A549 (cell line): ENCODE measurements at regions of chr3 and their contacts with region 1.

Region 1: DNA sequence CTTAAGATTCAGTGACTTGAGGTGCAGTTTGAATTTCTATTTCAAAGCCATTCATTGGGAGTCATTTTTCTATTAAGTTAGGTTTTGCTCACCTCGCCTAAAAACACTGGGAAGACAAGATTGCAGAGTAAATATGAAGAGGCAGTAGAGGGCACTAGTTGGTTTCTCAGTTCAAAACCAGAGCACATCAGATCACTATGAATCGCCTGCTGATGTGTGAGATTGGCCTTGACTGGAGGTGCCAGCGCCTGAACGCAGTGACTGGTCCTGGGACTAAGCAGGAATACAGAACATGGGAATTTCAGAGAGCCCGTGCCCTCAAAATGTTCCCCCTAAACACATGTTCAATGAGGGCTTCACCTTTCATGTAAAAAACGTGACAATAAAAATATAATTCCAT is 229.0 kb downstream of the ITPR1 start:
- DNase-seq: peak; percentile 88 to 89
- ATAC-seq: peak; percentile 86 to 93
- H3K4me3 ChIP-seq: no peak overlapping the region
- H3K27ac ChIP-seq: peak overlapping the region; percentile 65 to 79
- H3K4me1 ChIP-seq: peaks cover 42% of the 10 kb centered on the region
- CTCF ChIP-seq: peak; percentile 77
- EP300 ChIP-seq: no peak
- POLR2A ChIP-seq: no peak
- RAD21 ChIP-seq: peak; percentile 93

Region 2: DNA sequence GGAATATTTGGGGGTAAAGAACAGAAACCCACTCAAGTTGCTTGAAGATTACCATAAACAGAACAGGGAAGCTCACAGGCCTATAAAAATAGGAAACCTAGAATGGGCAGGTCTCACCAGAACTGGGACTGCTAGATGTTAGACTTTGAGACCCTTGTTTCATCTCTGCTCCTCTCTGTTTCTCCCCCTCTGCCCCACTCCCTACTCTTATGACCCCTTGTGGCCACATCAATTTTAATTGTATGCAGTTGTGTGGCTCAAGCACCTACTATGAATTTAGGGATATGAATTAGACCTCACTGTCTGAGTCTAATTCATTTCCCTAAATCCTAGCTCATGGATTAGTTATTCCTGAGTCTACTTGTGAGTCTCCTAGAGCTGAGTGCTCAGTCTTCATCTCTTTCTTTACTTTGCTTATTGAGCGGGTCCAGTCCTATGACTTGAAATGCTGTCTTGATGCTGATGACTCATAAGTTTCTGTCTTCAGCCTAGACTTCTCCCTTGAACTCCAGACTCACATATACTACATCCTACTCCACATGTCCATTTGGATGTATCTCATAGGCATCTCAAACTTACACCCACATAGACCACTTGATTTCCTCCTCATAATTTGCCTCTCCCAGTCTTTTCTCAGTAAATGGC is 150.3 kb before region 1 on chr3:
- CTCF ChIA-PET with region 1: no interaction called
- POLR2A ChIA-PET with region 1: no interaction called
- DNase-seq: peak in 1 of 2 experiments; percentile 14
- ATAC-seq: peak; percentile 43 to 73; a peak in 4 of 6 replicates
- H3K4me3 ChIP-seq: no peak overlapping the region
- H3K27ac ChIP-seq: no peak overlapping the region
- H3K4me1 ChIP-seq: no peaks in the 10 kb centered on the region
- CTCF ChIP-seq: no peak
- EP300 ChIP-seq: no peak
- POLR2A ChIP-seq: no peak
- RAD21 ChIP-seq: no peak

Region 3: DNA sequence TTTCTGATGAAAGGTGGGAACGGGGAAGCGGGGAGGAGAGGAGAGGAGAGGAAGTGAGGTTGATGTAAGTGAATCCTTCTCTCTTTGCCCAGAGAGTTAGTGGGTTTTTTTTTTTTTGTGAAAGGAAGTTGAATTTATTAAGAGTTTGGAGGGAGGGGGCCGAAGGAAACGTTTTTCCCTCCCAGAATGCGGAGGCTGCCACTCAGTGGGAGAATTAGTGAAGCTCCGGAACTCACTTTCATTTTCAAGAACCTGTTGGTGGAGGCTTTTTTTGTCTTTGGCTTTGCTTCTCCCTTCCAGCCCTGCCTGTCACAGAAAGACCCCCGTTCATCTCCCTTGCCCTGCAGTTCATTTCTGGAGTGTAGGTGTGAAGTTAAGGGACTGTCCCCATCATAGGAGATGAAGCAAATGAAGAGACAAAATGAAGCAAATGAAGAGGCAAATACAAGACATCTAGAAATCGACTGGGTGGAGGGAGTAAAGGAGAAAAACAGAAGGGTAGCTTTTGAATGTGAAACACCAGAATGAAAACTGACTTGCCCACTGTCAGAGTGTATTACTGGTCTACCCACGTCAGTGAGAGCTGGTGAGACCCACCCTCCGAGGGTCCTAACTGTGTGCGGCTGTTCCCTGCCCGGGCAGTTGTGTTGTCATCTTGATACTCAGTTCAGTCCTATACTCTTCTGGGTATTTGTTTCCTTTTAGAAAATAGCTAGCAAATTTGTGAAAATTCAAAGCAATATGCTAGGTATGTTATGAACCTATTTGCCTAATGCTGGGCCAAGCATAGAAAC is 137.4 kb before region 1 on chr3:
- CTCF ChIA-PET with region 1: no interaction called
- POLR2A ChIA-PET with region 1: no interaction called
- DNase-seq: no peak
- ATAC-seq: no peak
- H3K4me3 ChIP-seq: no peak overlapping the region
- H3K27ac ChIP-seq: no peak overlapping the region
- H3K4me1 ChIP-seq: no peaks in the 10 kb centered on the region
- CTCF ChIP-seq: no peak
- EP300 ChIP-seq: no peak
- POLR2A ChIP-seq: no peak
- RAD21 ChIP-seq: no peak

Region 4: GRCh38 chr3:4615750-4616149 is 106.4 kb before region 1 on chr3:
- CTCF ChIA-PET with region 1: no interaction called
- POLR2A ChIA-PET with region 1: no interaction called
- DNase-seq: no peak
- ATAC-seq: no peak
- H3K4me3 ChIP-seq: no peak overlapping the region
- H3K27ac ChIP-seq: no peak overlapping the region
- H3K4me1 ChIP-seq: no peaks in the 10 kb centered on the region
- CTCF ChIP-seq: no peak
- EP300 ChIP-seq: no peak
- POLR2A ChIP-seq: no peak
- RAD21 ChIP-seq: no peak

Region 5: GRCh38 chr3:4751502-4752101 is 29.5 kb after region 1 on chr3:
- CTCF ChIA-PET with region 1: interaction called, 26 read pairs
- POLR2A ChIA-PET with region 1: no interaction called
- DNase-seq: peak; percentile 56 to 65
- ATAC-seq: peak; percentile 17 to 41; a peak in 5 of 6 replicates
- H3K4me3 ChIP-seq: no peak overlapping the region
- H3K27ac ChIP-seq: peak overlapping the region; percentile 79 to 86
- H3K4me1 ChIP-seq: peaks cover 36% of the 10 kb centered on the region
- CTCF ChIP-seq: no peak
- EP300 ChIP-seq: no peak
- POLR2A ChIP-seq: no peak
- RAD21 ChIP-seq: no peak

Region 6: DNA sequence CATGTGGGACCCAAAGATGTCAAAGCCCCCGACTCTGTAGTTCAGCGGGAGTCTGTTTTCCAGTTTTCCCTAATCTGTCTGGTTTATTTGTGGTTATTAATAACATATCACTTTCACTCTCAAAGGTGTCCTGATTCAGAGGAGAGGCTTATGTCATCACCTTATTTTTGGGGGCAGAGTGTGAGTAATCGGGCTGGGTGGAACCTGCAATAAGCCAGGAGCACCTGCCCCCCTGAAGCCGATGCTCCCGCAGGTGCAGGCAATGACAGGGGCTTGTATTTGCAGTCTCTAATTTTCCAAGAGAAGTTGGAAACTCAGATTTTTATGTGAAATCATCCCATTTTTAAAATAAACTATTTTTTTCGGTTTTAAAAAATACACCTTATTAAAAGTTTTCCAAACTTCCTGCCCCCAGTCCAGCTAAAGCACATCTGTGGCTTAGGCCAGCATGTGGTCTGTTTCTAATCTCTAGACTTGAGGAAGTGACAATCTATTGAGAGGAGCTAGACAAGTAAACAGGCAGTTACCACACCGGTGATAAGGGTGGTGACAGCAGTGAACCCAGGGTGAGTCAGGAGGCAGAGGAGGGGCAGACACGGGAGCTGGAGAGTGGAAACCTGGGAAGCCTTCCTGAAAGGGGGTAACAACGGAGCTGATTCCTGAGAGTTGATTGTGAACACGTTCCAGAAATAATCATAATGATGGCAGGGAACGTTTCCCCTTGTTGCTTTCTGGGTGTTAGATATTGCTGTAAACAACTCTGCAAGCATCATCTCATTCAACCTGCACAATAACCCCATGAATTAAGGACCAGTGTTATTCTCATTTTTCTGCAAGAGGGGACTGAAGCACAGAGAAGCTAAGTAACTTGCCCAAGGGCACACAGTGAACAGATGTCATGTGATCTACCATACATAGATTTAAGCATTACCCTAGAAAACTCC is 294.4 kb after region 1 on chr3:
- CTCF ChIA-PET with region 1: interaction called, 14 read pairs
- POLR2A ChIA-PET with region 1: no interaction called
- DNase-seq: peak; percentile 90 to 95
- ATAC-seq: peak; percentile 74 to 81
- H3K4me3 ChIP-seq: no peak overlapping the region
- H3K27ac ChIP-seq: peak overlapping the region; percentile 94 to 98
- H3K4me1 ChIP-seq: peaks cover 98% of the 10 kb centered on the region
- CTCF ChIP-seq: no peak
- EP300 ChIP-seq: peak; percentile 83 to 85; a peak in 4 of 5 replicates
- POLR2A ChIP-seq: no peak
- RAD21 ChIP-seq: peak in 1 of 2 experiments; percentile 17; a peak in 1 of 5 replicates

Region 7: DNA sequence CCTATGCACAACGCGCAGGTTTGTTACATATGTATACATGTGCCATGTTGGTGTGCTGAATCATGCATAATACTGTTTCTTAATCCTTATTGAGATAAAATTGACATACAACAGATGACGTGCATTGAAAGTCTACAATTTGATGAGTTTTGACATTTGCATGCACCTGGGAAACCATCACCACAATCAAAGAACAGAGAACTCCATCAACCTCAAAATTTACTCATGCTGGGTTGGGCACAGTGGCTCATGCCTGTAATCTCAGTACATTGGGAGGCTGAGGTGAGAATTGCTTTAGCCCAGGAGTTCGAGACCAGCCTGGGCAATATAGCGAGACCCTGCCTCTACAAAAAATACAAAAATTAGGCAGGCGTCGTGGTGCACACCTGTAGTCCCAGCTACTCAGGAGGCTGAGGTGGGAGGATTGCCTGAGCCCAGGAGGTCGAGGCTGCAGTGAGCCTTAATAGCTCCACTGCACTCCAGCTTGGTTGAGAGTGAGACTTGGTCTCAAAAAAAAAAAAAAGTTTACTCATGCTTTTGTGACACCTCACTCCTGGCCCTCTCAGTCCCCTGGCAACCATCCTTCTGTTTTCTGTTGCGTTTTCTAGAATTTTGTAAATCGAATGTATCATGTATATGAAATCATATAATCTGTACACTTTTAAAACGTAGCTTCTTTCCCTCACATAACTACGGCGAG is 313.7 kb after region 1 on chr3:
- CTCF ChIA-PET with region 1: interaction called, 12 read pairs
- POLR2A ChIA-PET with region 1: no interaction called
- DNase-seq: no peak
- ATAC-seq: no peak; a peak in 1 of 6 replicates
- H3K4me3 ChIP-seq: no peak overlapping the region
- H3K27ac ChIP-seq: no peak overlapping the region
- H3K4me1 ChIP-seq: no peaks in the 10 kb centered on the region
- CTCF ChIP-seq: no peak
- EP300 ChIP-seq: no peak
- POLR2A ChIP-seq: no peak
- RAD21 ChIP-seq: no peak

Region 8: GRCh38 chr3:5063724-5064123 is 341.6 kb after region 1 on chr3:
- CTCF ChIA-PET with region 1: interaction called, 50 read pairs
- POLR2A ChIA-PET with region 1: no interaction called
- DNase-seq: no peak
- ATAC-seq: no peak
- H3K4me3 ChIP-seq: no peak overlapping the region
- H3K27ac ChIP-seq: no peak overlapping the region
- H3K4me1 ChIP-seq: 0 out of 3 replicates have a peak, but pooled peaks cover 1% of the 10 kb centered on the region
- CTCF ChIP-seq: no peak
- EP300 ChIP-seq: no peak
- POLR2A ChIP-seq: no peak
- RAD21 ChIP-seq: no peak

Region 9: GRCh38 chr3:5330152-5330810 is 608.2 kb after region 1 on chr3:
- CTCF ChIA-PET with region 1: no interaction called
- POLR2A ChIA-PET with region 1: no interaction called
- DNase-seq: peak; percentile 35 to 76
- ATAC-seq: peak; percentile 85 to 87
- H3K4me3 ChIP-seq: no peak overlapping the region
- H3K27ac ChIP-seq: peak overlapping the region; percentile 60 to 62
- H3K4me1 ChIP-seq: peaks cover 32% of the 10 kb centered on the region
- CTCF ChIP-seq: no peak
- EP300 ChIP-seq: peak in 1 of 2 experiments; percentile 28; a peak in 1 of 5 replicates
- POLR2A ChIP-seq: no peak
- RAD21 ChIP-seq: no peak